Left colon (tissue), 2 donors: ENCODE measurements at regions of chr14 and their contacts with region 1.

Region 1: DNA sequence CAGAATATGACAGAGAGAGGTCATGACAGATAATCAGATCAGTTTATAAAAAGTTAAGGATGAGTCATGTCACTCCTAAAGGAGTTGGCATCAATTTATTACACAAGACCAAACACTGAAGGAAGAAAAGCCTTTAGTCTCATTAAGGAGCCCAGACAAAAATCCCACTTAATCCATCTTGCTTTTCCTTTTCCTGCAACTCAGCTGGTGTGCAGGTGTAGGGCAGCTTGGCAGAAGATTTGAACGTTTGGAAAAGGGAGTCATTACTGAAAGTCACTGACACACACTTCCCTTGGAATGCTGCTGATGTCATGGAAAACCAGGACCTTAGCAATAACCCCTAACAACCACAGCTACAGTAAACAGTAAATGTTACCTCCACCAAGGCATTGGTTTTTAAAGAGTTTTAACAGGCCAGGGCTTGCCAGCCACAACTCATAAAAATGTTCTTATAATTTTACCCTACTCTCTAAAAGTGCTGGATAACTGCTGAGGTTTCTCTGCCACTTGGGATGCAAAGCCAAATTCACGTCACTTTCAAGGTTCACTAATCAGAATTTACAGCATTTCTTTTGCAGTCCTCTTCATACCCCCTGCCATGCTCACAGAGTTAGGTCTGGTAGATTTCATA is 320.6 kb downstream of the RAD51B start:
- DNase-seq: peak; percentile 23 to 64
- ATAC-seq: peak; percentile 63

Region 2: DNA sequence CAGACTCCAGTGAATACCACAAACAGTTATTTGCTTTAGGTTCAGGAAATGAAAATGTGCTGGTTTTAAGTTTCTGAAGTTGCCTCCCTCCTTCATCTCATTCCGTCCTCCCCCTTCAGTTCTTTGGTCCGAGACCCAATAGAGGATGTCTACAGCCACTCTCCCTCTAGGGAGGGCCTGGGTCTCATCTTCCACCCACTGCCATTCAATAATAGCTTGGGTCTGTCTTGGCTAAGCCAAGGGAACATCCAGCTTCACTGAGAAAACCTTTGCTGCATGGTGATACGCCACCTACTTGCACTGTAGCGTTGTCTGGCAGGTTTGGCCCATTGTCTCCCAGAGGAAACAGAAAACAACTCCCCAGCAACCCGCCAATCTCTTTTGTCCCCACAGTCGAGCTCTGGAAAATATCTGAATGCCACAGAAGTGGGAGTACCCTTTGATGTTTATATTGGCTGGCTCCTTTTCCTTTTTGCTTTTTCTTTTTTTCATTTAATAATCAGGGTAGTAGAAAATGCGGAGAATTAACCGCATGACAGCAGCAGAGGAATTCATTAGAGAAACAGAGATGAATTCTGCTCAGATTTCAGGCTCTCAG is 59.4 kb after region 1 on chr14:
- intact Hi-C with region 1: loop called in 1 of 2 experiments (anchors 10 kb)
- DNase-seq: no peak
- ATAC-seq: no peak

Region 3: GRCh38 chr14:68513838-68514620 is 373.8 kb after region 1 on chr14:
- intact Hi-C with region 1: no loop called
- DNase-seq: no peak
- ATAC-seq: no peak